ENCODE measurements at regions of chr1 and their contacts with region 1.

Region 1: GRCh38 chr1:150621497-150622302 is 7.7 kb downstream of the ENSA start:
- DNase-seq: peak; percentile 58
- ATAC-seq: no peak
- H3K4me3 ChIP-seq: no peak overlapping the region
- H3K27ac ChIP-seq: peak overlapping the region; percentile 93
- H3K4me1 ChIP-seq: peaks cover 53% of the 10 kb centered on the region
- H3K27me3 ChIP-seq: no peaks in the 10 kb centered on the region
- CTCF ChIP-seq: peak; percentile 82

Region 2: DNA sequence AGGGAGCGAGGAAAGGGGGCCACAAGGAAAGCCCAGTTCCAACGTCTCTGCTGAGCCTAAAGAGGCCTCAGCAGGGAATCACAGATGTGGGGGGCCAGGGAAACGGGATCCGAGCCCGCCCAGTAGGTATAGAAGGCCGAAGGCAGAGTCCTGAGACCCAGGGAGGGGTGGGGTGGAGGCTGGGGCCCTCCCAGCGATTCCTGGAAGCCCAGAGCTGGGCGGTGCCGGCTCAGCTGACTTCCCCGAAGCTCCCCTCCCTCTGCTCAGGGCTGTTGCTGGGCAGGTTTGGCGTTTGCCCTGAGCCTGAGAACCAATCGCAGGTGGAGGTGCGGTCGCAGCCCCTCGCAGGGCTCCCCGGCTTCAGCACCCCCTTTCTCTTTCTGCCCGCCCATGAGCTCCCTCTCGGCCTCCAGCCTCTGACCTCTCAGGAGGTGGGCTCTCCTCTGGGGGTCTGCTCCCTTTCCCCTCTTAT is 59.7 kb before region 1 on chr1:
- CTCF ChIA-PET with region 1: interaction called, 6 read pairs
- POLR2A ChIA-PET with region 1: interaction called, 5 read pairs
- intact Hi-C with region 1: loop called (anchors 2 kb)
- DNase-seq: peak; percentile 91
- ATAC-seq: peak; percentile 68
- H3K4me3 ChIP-seq: peak overlapping the region; percentile 69
- H3K27ac ChIP-seq: peak overlapping the region; percentile 96
- H3K4me1 ChIP-seq: peaks cover 37% of the 10 kb centered on the region
- H3K27me3 ChIP-seq: no peaks in the 10 kb centered on the region
- CTCF ChIP-seq: no peak

Region 3: DNA sequence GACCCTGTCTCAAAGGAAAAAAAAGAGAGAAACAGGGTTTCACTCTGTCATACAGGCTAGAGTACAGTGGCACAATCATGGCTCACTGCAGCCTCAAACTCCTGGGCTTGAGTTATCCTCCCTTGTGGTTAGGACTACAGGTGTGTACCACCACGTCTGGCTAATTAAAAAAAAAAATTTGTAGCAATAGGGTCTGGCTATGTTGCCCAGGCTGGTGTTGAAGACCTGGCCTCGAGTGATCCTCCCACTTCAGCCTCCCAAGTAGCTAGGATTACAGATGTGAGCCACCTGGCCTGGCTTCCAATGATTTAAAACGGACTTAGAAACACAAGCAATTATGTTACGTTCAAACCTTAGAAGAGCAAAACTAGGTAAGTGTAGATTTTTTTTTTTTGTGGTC is 53.2 kb after region 1 on chr1:
- CTCF ChIA-PET with region 1: no interaction called
- POLR2A ChIA-PET with region 1: interaction called, 18 read pairs
- intact Hi-C with region 1: no loop called
- DNase-seq: no peak
- ATAC-seq: no peak
- H3K4me3 ChIP-seq: no peak overlapping the region
- H3K27ac ChIP-seq: no peak overlapping the region
- H3K4me1 ChIP-seq: no peaks in the 10 kb centered on the region
- H3K27me3 ChIP-seq: no peaks in the 10 kb centered on the region
- CTCF ChIP-seq: no peak

Region 4: DNA sequence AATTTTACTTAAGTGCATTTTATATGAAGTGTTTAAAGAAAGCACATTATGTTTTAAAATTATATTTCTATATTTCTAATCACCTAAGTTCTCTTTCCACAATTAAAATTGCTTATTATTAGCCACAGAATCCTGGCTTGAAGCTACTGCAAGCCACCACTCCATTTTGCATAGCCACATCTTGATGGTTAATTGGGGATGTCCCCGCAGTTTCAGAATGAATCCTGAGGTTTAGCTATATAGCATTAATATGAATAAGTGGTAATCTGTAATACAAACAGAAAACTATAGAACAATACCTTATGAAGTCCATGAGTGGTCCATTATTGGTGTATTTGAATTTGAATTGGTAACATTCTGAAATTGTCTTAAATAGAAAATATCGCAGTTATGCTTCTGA is 86.9 kb after region 1 on chr1:
- CTCF ChIA-PET with region 1: no interaction called
- POLR2A ChIA-PET with region 1: no interaction called
- intact Hi-C with region 1: no loop called
- DNase-seq: no peak
- ATAC-seq: no peak
- H3K4me3 ChIP-seq: no peak overlapping the region
- H3K27ac ChIP-seq: no peak overlapping the region
- H3K4me1 ChIP-seq: no peaks in the 10 kb centered on the region
- H3K27me3 ChIP-seq: no peaks in the 10 kb centered on the region
- CTCF ChIP-seq: no peak

Region 5: DNA sequence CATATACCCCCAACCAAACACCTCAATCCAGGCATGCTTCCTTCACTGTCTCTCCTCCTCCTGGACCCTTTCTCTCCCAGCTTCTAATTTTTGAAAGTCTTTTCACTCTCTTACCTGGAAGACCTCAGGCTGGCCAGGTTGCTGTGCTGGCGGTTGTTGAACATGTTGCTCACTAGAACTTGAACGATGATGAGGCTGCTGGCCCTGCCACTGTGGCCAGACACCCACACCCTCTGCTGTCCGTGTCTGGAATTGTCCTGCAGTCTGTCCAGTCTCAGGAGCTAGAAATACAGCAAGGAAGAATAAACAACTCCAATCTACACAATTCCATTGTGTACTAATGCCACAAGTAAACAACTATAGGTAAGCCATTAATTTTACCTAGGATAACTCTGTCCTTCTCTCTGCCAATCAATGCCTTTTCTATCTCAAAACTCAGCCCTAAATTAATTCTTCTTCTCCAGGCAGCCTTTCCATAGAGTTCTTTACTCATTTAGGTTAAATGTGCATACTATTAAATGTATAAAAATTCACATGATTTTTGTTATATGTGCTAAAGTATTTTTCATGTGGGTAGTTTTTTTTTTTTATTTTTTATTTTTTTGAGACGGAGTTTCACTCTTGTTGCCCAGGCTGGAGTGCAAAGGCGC is 191.5 kb after region 1 on chr1:
- CTCF ChIA-PET with region 1: interaction called, 10 read pairs
- POLR2A ChIA-PET with region 1: interaction called, 7 read pairs
- intact Hi-C with region 1: no loop called
- DNase-seq: peak; percentile 79
- ATAC-seq: peak; percentile 98
- H3K4me3 ChIP-seq: no peak overlapping the region
- H3K27ac ChIP-seq: no peak overlapping the region
- H3K4me1 ChIP-seq: no peaks in the 10 kb centered on the region
- H3K27me3 ChIP-seq: no peaks in the 10 kb centered on the region
- CTCF ChIP-seq: peak; percentile 96

Region 6: GRCh38 chr1:150979092-150980056 is 357.7 kb after region 1 on chr1:
- CTCF ChIA-PET with region 1: no interaction called
- POLR2A ChIA-PET with region 1: no interaction called
- intact Hi-C with region 1: loop called (anchors 5 kb)
- DNase-seq: peak; percentile 99
- ATAC-seq: peak; percentile 13
- H3K4me3 ChIP-seq: no peak overlapping the region
- H3K27ac ChIP-seq: no peak overlapping the region
- H3K4me1 ChIP-seq: peaks cover 42% of the 10 kb centered on the region
- H3K27me3 ChIP-seq: no peaks in the 10 kb centered on the region
- CTCF ChIP-seq: peak; percentile 100